PC-9 (cell line): ENCODE measurements at regions of chr12 and their contacts with region 1.

Region 1: GRCh38 chr12:96263449-96263902 is 69.3 kb downstream of the ELK3 start:
- DNase-seq: no peak
- H3K4me3 ChIP-seq: no peak overlapping the region
- H3K27ac ChIP-seq: no peak overlapping the region
- H3K4me1 ChIP-seq: no peaks in the 10 kb centered on the region
- H3K27me3 ChIP-seq: no peaks in the 10 kb centered on the region
- CTCF ChIP-seq: no peak

Region 2: DNA sequence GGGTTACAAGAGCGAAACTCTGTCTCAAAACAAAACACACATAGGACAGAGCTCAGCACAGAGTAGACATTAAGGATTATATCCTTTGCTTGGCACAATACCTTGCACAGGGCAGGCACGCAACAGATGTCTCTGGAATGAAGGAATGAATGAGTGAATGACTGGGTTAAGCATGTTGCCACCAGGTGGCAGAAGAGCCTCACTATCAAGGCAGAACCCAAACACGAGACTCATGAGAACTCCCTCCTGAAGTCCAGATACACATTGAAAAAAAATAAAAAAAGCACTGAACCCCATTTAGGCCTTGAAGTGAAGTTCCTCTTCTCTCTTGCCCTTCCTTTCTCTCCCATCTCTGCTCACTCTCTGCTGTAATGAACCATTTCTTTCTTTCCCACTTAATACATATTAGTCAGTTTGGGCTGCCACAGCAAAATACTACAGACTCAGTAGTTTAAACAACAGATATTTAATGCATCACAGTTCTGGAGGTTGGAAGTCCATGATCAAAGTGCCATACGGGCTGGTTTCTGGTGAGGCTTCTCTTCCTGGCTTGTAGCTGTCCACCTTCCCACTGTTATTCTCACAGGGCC is 201.5 kb before region 1 on chr12:
- CTCF ChIA-PET with region 1: no interaction called
- POLR2A ChIA-PET with region 1: no interaction called
- intact Hi-C with region 1: loop called (anchors 5 kb)
- DNase-seq: peak; percentile 69 to 72
- H3K4me3 ChIP-seq: no peak overlapping the region
- H3K27ac ChIP-seq: 0 out of 2 replicates have a peak overlapping the region, but pooled peaks have one; percentile 14
- H3K4me1 ChIP-seq: peaks cover 9% of the 10 kb centered on the region; the same call in 1 of the 2 replicates
- H3K27me3 ChIP-seq: no peaks in the 10 kb centered on the region
- CTCF ChIP-seq: peak; percentile 89